PC-9 (cell line): ENCODE measurements at regions of chr9 and their contacts with region 1.

Region 1: GRCh38 chr9:137086531-137087408 is at the start of gene MAN1B1:
- DNase-seq: peak; percentile 97 to 100
- H3K4me3 ChIP-seq: peak within 1 kb of the TSS; percentile 88
- H3K27ac ChIP-seq: peak within 1 kb of the TSS; percentile 80
- H3K4me1 ChIP-seq: peaks cover 39% of the 10 kb centered on the region
- H3K27me3 ChIP-seq: no peaks in the 10 kb centered on the region
- CTCF ChIP-seq: no peak
- total RNA-seq, gene MAN1B1: 79.3 and 107 TPM in 2 replicates

Region 2: DNA sequence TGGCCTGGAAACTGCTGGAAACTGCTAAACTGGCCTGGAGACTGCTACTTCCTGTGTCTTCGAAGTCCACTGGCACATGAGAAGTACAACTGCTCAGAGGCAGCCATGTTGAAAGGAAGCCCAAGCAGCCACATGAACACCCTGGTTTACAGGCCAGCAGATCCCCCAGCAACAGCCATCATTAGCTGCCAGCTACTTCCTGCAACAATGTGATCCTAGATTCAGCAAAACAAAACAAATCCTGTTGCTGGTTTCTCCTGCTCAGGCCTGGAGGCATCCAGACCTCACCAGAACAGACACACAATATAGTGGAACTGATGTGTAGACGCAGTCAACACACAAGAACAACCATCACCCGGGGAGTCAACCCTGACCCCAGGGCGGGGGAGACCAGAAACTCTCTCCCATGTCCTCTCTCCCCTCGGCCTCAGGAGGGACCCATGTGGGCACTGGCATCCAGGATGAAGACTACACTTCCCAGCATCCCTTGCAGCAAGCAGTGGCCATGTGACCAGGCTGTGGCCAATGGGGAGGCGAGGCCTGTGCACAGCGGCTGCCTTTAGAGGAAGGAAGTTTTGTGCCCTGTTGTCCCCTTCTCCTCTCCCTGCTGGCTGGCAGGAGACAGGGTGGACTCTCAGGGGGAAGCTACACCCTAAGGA is 313.3 kb before region 1 on chr9:
- CTCF ChIA-PET with region 1: no interaction called
- POLR2A ChIA-PET with region 1: no interaction called
- intact Hi-C with region 1: no loop called
- DNase-seq: no peak
- H3K4me3 ChIP-seq: no peak overlapping the region
- H3K27ac ChIP-seq: no peak overlapping the region
- H3K4me1 ChIP-seq: no peaks in the 10 kb centered on the region
- H3K27me3 ChIP-seq: peaks cover 15% of the 10 kb centered on the region
- CTCF ChIP-seq: no peak

Region 3: GRCh38 chr9:137046098-137046787 is 40.5 kb before region 1 on chr9 and contains the start of gene NPDC1:
- CTCF ChIA-PET with region 1: interaction called, 13 read pairs
- POLR2A ChIA-PET with region 1: interaction called, 4 read pairs
- intact Hi-C with region 1: no loop called
- DNase-seq: peak; percentile 73 to 91
- H3K4me3 ChIP-seq: peak within 1 kb of the TSS; percentile 92
- H3K27ac ChIP-seq: no peak within 1 kb of the TSS
- H3K4me1 ChIP-seq: peaks cover 15% of the 10 kb centered on the region
- H3K27me3 ChIP-seq: peaks cover 6% of the 10 kb centered on the region
- CTCF ChIP-seq: peak; percentile 87
- total RNA-seq, gene NPDC1: 89.8 and 137 TPM in 2 replicates

Region 4: DNA sequence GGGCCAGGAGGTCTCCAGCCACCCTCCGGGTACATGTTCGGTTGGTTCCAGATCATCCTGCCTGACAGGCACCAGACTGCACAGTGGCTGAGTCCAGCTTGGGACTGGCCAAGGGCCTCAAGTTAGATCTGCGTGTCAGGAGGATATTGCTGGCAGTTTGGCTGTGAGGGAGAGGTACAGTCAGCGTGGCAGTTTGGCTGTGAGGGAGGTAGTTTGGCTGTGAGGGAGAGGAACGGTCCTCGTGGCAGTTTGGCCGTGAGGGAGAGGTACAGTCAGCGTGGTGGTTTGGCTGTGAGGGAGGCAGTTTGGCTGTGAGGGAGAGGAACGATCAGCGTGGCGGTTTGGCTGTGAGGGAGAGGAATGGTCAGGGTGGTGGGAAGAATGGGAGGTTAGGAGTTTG is 829.8 kb after region 1 on chr9:
- CTCF ChIA-PET with region 1: no interaction called
- POLR2A ChIA-PET with region 1: interaction called, 11 read pairs
- intact Hi-C with region 1: no loop called
- DNase-seq: no peak
- H3K4me3 ChIP-seq: no peak overlapping the region
- H3K27ac ChIP-seq: no peak overlapping the region
- H3K4me1 ChIP-seq: no peaks in the 10 kb centered on the region
- H3K27me3 ChIP-seq: peaks cover 84% of the 10 kb centered on the region
- CTCF ChIP-seq: no peak